MCF 10A (cell line): ENCODE measurements at regions of chr12 and their contacts with region 1.

Region 1: DNA sequence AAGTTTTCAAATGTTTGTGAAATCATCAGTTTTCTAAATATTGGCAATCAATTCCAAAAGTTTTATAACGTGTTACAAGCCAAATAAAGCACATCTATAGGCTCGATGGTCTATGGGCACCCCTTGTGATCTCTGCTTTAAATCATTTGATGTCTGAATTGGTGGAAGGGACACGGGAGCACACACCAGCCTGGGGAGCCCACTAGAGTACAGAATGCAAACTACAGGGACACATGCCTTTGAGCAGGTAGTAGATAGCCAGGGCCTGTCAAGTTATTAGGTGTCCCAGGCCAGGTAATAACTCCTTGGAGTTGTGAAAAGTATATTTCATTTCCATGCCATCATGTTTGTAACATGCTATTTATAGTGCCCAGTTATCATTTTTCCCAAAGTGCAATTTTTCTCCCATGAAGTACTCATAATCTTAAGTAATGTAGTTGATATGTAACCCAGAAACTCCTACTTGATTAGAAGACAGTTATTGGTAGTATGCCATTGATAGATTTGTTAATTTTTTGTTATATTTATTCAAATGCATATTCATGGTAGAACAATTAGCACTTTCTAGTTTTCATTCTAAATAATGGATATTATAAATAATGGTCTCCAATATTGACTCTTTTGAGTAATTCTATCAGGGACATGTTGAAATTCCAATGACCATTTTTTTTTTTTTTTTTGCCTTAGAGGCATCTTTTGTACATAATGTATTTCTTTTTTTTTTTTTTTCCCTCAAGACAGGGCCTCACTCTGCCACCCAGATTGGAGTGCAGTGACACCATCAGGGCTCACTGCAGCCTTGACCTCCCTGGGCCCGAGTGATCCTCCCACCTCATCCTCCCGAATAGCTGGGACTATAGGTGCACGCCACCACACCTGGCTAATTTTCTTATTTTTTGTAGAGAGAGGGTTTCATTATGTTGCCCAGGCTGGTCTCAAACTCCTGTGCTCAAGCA is 96.9 kb upstream of the FGD4 start:
- DNase-seq: peak; percentile 29
- H3K4me3 Mint-ChIP-seq: no peak overlapping the region
- H3K27ac Mint-ChIP-seq: no peak overlapping the region
- H3K4me1 Mint-ChIP-seq: no peaks in the 10 kb centered on the region
- H3K27me3 Mint-ChIP-seq: no peaks in the 10 kb centered on the region
- CTCF ChIP-seq: peak; percentile 28

Region 2: GRCh38 chr12:31906557-31907301 is 395.8 kb before region 1 on chr12:
- CTCF ChIA-PET with region 1: no interaction called
- POLR2A ChIA-PET with region 1: no interaction called
- intact Hi-C with region 1: no loop called
- DNase-seq: no peak
- H3K4me3 Mint-ChIP-seq: no peak overlapping the region
- H3K27ac Mint-ChIP-seq: no peak overlapping the region
- H3K4me1 Mint-ChIP-seq: no peaks in the 10 kb centered on the region
- H3K27me3 Mint-ChIP-seq: no peaks in the 10 kb centered on the region
- CTCF ChIP-seq: no peak

Region 3: DNA sequence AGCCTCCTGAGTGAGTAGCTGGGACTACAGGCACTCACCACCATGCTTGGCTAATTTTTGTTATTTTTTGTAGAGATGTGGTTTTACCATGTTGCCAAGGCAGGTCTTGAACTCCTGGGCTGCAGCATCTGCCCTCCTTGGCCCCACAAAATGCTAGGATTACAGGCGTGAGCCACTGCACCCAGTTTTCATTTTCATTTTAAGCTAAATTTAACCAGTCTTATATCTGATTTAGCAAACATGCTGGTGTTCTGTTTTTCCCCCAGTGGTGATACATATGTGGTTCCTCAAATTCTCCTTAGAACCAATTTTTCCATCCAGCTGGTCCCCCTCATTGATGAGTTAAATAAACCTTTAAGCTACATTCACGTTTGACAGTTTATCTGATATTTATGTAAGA is 239.6 kb before region 1 on chr12:
- CTCF ChIA-PET with region 1: interaction called, 19 read pairs
- POLR2A ChIA-PET with region 1: no interaction called
- intact Hi-C with region 1: no loop called
- DNase-seq: no peak
- H3K4me3 Mint-ChIP-seq: no peak overlapping the region
- H3K27ac Mint-ChIP-seq: no peak overlapping the region
- H3K4me1 Mint-ChIP-seq: no peaks in the 10 kb centered on the region
- H3K27me3 Mint-ChIP-seq: no peaks in the 10 kb centered on the region
- CTCF ChIP-seq: no peak

Region 4: GRCh38 chr12:32273712-32274111 is 28.8 kb before region 1 on chr12:
- CTCF ChIA-PET with region 1: no interaction called
- POLR2A ChIA-PET with region 1: no interaction called
- intact Hi-C with region 1: no loop called
- DNase-seq: no peak
- H3K4me3 Mint-ChIP-seq: no peak overlapping the region
- H3K27ac Mint-ChIP-seq: no peak overlapping the region
- H3K4me1 Mint-ChIP-seq: peaks cover 13% of the 10 kb centered on the region
- H3K27me3 Mint-ChIP-seq: no peaks in the 10 kb centered on the region
- CTCF ChIP-seq: no peak